HCT116 (cell line): ENCODE measurements at regions of chr17 and their contacts with region 1.

Region 1: GRCh38 chr17:38853292-38854219 is at the start of gene RPL23:
- DNase-seq: peak; percentile 95
- ATAC-seq: peak; percentile 80
- H3K4me3 ChIP-seq: peak within 1 kb of the TSS; percentile 67 to 99
- H3K27ac ChIP-seq: peak within 1 kb of the TSS; percentile 85
- H3K4me1 ChIP-seq: peaks cover 19 to 44% of the 10 kb centered on the region in 2 experiments; a peak in 3 of 4 replicates
- H3K27me3 ChIP-seq: no peaks in the 10 kb centered on the region
- CTCF ChIP-seq: no peak
- POLR2A ChIP-seq: peak; percentile 98
- RAD21 ChIP-seq: peak; percentile 17; the same call in 1 of the 2 replicates
- total RNA-seq, gene RPL23: 1,631 TPM

Region 2: DNA sequence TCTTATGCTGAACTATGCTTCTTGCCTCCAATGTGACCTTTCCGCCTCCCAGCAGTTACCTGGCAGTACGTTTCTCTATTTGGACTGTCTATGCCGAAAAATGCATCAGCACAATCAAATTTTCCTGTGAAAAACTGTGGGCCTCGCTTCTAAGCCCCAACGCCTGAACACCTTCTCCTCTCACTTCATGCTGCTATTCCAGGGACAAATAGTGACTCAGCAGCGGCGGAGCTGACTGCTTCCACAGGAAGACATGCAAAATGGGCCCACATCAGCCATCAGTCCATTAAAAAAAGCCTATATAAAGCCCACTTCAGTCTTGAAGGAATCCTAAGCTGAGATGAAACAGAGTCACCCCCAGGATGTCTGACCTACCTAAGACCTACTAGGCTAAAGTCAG is 43.7 kb before region 1 on chr17:
- CTCF ChIA-PET with region 1: no interaction called
- POLR2A ChIA-PET with region 1: no interaction called
- RAD21 ChIA-PET with region 1: no interaction called
- intact Hi-C with region 1: no loop called
- DNase-seq: no peak
- ATAC-seq: no peak
- H3K4me3 ChIP-seq: no peak overlapping the region
- H3K27ac ChIP-seq: no peak overlapping the region
- H3K4me1 ChIP-seq: no peaks in the 10 kb centered on the region
- H3K27me3 ChIP-seq: no peaks in the 10 kb centered on the region
- CTCF ChIP-seq: no peak
- POLR2A ChIP-seq: no peak
- RAD21 ChIP-seq: no peak

Region 3: DNA sequence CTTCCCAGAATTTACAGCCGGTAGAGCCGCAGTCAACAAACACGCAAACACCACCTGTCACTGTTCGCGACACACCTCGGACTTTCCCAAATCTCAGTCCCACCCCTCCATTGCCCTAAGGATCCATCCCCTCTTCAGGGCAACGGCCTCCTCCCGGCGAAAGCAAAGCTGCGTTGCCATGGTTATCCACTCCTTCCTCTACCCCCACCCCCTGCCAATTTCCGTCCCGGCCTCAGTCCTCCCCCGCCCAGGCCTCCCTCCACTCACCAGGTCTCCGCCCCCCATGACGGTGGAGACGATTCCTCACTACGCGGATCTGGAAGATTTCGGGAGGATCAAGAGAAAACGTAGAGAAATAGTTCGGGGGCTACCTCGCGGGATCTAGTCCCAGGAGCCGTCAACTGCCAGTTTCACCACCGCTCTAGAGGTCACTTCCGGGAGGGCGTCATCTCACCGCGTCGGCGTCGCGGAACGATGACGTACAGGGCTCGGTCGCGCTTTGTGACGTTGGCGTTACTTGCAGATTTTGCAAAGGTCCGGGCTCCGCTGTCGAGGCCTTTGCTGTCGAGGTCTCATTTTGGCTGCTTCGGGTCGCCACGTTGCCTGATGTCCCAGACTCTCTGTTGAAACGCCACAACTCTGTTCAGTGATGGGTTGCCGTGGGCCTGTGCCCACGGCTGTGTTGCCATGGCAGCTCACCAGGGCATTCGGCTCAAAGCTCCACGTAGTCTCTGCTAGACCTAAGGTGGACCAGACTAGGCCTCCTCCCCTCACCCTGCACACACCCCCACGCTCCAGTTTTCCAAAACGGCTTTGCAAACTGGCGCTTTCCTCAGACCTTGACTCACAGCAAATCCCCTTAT is 28.4 kb before region 1 on chr17 and contains the start of gene CWC25:
- CTCF ChIA-PET with region 1: no interaction called
- POLR2A ChIA-PET with region 1: interaction called, 12 read pairs
- RAD21 ChIA-PET with region 1: no interaction called
- intact Hi-C with region 1: no loop called
- DNase-seq: peak; percentile 93
- ATAC-seq: peak; percentile 82
- H3K4me3 ChIP-seq: peak within 1 kb of the TSS; percentile 71 to 89
- H3K27ac ChIP-seq: peak within 1 kb of the TSS; percentile 92
- H3K4me1 ChIP-seq: peaks cover 11 to 20% of the 10 kb centered on the region in 2 experiments
- H3K27me3 ChIP-seq: no peaks in the 10 kb centered on the region
- CTCF ChIP-seq: no peak
- POLR2A ChIP-seq: peak; percentile 83
- RAD21 ChIP-seq: peak; percentile 31; the same call in 1 of the 2 replicates
- total RNA-seq, gene CWC25: 23.9 TPM

Region 4: DNA sequence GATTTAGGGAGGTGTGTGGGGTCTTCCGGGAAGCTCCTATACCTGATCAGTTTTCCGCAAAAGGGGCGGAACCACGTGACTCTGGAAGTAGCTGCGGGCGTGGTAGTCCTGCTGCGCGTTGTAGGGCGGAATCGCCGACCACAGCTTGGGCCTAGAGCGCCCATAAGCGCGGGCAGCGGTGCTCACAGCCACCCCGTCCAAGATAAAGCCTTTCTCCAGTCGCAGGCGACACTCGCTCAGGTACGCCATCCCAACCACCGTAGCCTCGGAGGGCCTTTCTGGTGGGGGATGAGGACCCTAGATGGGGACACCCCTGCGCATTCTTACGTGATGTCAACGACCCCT is 12.4 kb before region 1 on chr17:
- CTCF ChIA-PET with region 1: no interaction called
- POLR2A ChIA-PET with region 1: interaction called, 22 read pairs
- RAD21 ChIA-PET with region 1: no interaction called
- intact Hi-C with region 1: no loop called
- DNase-seq: no peak
- ATAC-seq: no peak
- H3K4me3 ChIP-seq: no peak overlapping the region
- H3K27ac ChIP-seq: no peak overlapping the region
- H3K4me1 ChIP-seq: peaks cover 0 to 4% of the 10 kb centered on the region in 2 experiments; a peak in 1 of 4 replicates
- H3K27me3 ChIP-seq: no peaks in the 10 kb centered on the region
- CTCF ChIP-seq: no peak
- POLR2A ChIP-seq: no peak
- RAD21 ChIP-seq: no peak

Region 5: DNA sequence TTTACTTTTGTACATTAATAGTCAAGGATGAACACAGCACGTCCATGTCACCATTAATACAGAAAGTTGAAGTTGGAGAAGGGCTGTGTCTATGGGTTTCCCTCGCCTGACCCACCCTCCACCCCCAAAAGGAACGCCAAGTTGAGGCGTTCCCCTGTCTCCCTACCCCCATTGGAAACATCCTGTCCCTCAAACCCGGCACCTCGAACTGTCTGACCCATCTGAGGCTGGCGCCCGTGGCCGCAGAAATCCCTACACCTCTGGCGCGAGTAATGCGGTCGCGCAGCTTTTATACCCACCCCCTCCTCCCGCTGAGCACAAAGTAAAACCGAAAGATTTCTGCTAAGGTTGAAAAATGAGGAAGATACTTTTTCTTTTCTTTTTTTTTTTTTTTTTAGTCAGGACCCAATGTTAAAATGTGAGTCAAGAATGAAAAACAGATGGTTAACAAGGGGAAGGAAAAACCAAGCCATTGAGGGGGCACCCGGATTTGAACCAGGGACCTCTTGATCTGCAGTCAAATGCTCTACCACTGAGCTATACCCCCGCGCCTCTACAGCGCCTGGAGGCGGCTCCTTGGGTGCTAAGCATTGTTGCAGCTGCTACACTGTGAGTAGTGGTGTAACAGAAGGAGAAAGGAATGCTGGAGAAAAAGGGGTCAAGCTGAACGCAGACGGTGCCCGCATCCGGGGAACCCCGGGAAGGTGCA is 15.4 kb after region 1 on chr17:
- CTCF ChIA-PET with region 1: interaction called, 4 read pairs
- POLR2A ChIA-PET with region 1: interaction called, 55 read pairs
- RAD21 ChIA-PET with region 1: interaction called in 1 of 2 experiments, 5 read pairs
- intact Hi-C with region 1: no loop called
- DNase-seq: peak; percentile 79
- ATAC-seq: peak; percentile 55
- H3K4me3 ChIP-seq: peak overlapping the region; percentile 83 to 98
- H3K27ac ChIP-seq: peak overlapping the region; percentile 97
- H3K4me1 ChIP-seq: peaks cover 58 to 85% of the 10 kb centered on the region in 2 experiments
- H3K27me3 ChIP-seq: no peaks in the 10 kb centered on the region
- CTCF ChIP-seq: peak in 2 of 3 experiments; percentile 26 to 27; a peak in 4 of 6 replicates
- POLR2A ChIP-seq: no peak
- RAD21 ChIP-seq: 0 out of 2 replicates have a peak, but pooled peaks have one; percentile 9